Left ventricle myocardium superior (tissue), 1 donor: ENCODE measurements at regions of chr15 and their contacts with region 1.

Region 1: DNA sequence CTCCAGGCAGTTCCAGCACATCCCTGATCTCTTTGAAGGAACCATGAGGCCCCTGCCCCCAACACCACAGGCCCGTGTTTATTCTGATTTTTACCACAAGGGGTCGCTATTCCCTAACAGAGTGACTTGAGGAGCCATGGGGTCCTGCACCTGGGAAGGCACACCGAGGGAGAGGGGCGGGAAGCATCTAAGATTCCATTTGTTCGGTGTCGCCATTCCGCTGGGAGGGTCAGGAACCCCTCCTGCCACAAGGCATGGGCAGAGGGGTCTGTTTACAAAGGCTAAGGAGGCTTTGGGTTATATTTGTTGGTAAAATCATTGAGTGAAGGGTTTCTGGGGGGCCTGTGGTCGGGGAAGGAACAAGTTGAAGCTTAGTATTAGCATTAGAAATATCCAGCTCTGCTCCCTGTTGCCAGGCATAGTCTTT is 77.1 kb downstream of the WDR76 start:
- DNase-seq: peak; percentile 33
- ATAC-seq: peak; percentile 83

Region 2: DNA sequence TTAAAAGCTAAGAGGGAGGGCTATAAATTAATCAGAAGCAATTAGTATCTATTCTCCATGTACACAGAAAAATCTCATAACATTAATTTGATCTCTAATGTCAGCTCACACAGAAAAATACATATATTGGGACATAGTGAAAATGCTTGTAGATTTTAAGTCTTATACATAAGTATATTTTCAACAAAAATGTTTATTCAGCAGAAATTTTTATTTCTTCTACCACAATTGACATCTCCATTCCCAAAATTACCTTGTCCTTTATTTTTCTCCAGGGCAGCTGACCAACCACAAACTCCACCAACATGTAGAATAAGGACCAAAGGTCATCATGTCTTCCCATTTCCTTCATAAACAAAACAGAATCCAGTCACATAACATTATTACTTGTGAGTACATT is 1092.4 kb before region 1 on chr15:
- intact Hi-C with region 1: no loop called
- DNase-seq: no peak
- ATAC-seq: no peak

Region 3: GRCh38 chr15:43948691-43949325 is 44.9 kb after region 1 on chr15:
- intact Hi-C with region 1: no loop called
- DNase-seq: no peak
- ATAC-seq: no peak

Region 4: GRCh38 chr15:43998607-43999006 is 94.7 kb after region 1 on chr15:
- intact Hi-C with region 1: no loop called
- DNase-seq: peak; percentile 55
- ATAC-seq: peak; percentile 95

Region 5: DNA sequence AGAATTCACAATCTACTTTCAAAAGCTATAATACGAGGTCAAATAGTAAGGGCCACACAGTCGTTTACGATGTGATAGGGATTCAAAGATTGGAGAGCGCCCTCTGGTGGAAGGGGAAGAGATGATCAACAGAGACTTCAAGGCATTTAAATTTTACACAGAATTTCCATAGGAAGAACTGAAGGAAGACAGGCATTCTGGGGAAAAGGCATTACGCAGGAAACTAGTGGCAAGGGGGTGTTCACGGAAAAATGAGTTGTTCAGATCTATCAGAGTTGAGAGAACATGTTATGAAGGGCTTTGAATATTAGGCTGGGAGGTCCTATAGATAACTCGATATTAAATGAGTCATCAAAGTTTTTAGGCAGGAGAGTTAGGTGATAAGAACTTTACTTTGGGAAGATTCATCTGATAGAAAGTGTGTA is 162.5 kb after region 1 on chr15:
- intact Hi-C with region 1: loop called (anchors 5 kb)
- DNase-seq: no peak
- ATAC-seq: peak; percentile 60

Region 6: GRCh38 chr15:44183363-44183762 is 279.5 kb after region 1 on chr15:
- intact Hi-C with region 1: no loop called
- DNase-seq: no peak
- ATAC-seq: no peak

Region 7: GRCh38 chr15:44215594-44215993 is 311.7 kb after region 1 on chr15:
- intact Hi-C with region 1: loop called (anchors 10 kb)
- DNase-seq: no peak
- ATAC-seq: no peak